Spleen (tissue), 13 donors: ENCODE measurements at regions of chr12 and their contacts with region 1.

Region 1: DNA sequence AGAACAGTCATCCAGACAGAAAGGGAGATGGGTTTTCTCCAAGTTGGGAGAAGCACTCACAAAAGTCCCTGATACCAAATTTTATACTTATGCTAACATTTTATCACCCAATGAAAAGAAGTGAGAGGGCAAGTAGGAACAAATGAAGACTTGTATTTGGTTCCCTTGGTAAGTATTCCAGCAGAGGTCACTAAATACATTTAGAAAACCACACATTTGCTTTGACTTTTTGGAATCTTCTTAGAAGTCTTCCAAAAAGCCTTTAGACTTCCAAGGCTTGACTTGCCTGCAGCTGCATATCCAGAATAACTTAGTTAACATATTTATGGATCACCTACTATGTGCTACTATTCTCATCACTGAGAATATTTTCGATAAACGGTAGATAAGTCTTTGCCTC is 3.1 kb upstream of the GYS2 start:
- DNase-seq: no peak
- H3K4me3 ChIP-seq: no peak overlapping the region
- H3K27ac ChIP-seq: no peak overlapping the region
- H3K4me1 ChIP-seq: peaks cover 0 to 7% (median 2%) of the 10 kb centered on the region in 6 donors
- H3K27me3 ChIP-seq: no peaks in the 10 kb centered on the region
- CTCF ChIP-seq: peak in 7 of 11 experiments; percentile 13 to 44 (median 22)
- POLR2A ChIP-seq: no peak

Region 2: DNA sequence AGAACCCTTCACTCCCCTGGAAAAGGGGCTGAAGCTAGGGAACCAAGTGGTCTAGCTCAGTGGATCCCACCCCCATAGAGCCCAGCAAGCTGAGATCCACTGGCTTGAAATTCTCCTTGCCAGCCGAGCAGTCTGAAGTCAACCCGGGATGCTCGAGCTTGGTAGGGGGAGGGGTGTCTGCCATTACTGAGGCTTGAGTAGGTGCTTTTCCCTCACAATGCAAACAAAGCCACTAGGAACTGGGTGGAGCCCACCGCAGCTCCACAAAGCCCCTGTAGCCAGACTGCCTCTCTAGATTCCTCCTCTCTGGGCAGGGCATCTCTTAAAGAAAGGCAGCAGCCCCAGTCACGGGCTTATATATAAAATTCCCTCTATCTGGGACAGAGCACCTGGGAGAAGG is 457.9 kb before region 1 on chr12:
- intact Hi-C with region 1: no loop called
- DNase-seq: no peak
- H3K4me3 ChIP-seq: no peak overlapping the region
- H3K27ac ChIP-seq: no peak overlapping the region
- H3K4me1 ChIP-seq: no peaks in the 10 kb centered on the region
- H3K27me3 ChIP-seq: no peaks in the 10 kb centered on the region
- CTCF ChIP-seq: no peak
- POLR2A ChIP-seq: no peak

Region 3: GRCh38 chr12:21683115-21683514 is 75.4 kb after region 1 on chr12:
- intact Hi-C with region 1: loop called (anchors 5 kb)
- DNase-seq: no peak
- H3K4me3 ChIP-seq: no peak overlapping the region
- H3K27ac ChIP-seq: no peak overlapping the region
- H3K4me1 ChIP-seq: peaks cover 0 to 9% (median 0%) of the 10 kb centered on the region in 6 donors
- H3K27me3 ChIP-seq: peaks cover 0 to 8% (median 0%) of the 10 kb centered on the region in 7 donors
- CTCF ChIP-seq: no peak
- POLR2A ChIP-seq: no peak